Heart right ventricle (tissue), 16 donors: ENCODE measurements at regions of chr7 and their contacts with region 1.

Region 1: DNA sequence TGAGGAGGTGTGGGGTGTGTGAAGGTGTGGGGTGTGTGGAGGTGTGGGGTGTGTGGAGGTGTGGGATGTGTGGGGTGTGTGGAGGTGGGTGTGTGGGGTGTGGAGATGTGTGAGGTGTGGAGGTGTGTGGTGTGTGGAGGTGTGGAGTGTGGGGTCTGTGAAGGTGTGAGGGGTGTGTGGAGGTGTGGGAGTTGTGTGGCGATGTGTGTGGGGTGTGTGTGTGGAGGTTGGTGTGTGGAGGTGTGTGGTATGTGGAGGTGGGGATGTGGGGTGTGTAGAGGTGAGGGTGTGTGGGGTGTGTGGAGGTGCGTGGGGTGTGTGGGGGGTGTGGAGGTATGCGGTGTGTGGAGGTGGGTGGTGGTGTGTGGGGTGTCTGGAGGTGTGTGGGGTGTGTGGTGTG is 34.8 kb downstream of the SPDYE17 start:
- DNase-seq: no peak
- ATAC-seq: peak in 5 of 8 donors; percentile 14 to 53 (median 27)
- H3K4me3 ChIP-seq: no peak overlapping the region
- H3K27ac ChIP-seq: no peak overlapping the region
- H3K4me1 ChIP-seq: no peaks in the 10 kb centered on the region
- H3K27me3 ChIP-seq: no peaks in the 10 kb centered on the region
- CTCF ChIP-seq: no peak

Region 2: DNA sequence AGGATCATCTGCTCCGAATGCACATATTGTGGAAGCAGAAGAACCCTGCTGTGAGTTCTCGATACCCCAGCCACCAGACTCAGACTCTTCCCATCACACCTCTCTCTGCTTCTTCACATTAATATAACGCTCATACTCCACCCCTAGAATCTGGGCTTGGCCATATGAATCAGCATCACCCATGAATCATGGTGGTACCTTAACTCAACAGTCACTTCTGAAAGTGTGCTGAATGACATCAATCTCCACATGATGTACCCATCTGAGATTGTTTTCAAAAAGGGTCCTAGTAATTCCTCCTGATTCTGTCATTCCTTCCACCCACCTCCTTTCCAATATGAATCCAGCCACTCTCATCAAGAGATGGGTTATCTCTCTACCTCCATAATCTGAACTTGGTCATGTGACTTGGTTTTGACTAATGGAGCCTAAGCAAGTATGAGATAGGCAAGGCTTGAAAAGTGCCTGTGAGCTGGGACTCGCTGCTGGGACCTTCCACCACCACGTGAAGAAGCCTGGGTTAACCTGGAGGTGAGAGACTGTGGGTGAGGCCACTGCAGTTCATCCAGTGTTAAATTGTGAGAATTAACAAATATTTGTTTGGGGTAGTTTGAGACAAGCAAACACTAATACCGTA is 654.0 kb before region 1 on chr7:
- intact Hi-C with region 1: no loop called
- DNase-seq: no peak
- ATAC-seq: no peak
- H3K4me3 ChIP-seq: no peak overlapping the region
- H3K27ac ChIP-seq: no peak overlapping the region
- H3K4me1 ChIP-seq: peaks cover 7 to 97% (median 80%) of the 10 kb centered on the region in 9 donors
- H3K27me3 ChIP-seq: no peaks in the 10 kb centered on the region
- CTCF ChIP-seq: no peak

Region 3: GRCh38 chr7:76509931-76510877 is 487.2 kb before region 1 on chr7 and contains the start of gene UPK3B:
- intact Hi-C with region 1: loop called in 1 of 10 experiments (anchors 10 kb)
- DNase-seq: no peak
- ATAC-seq: no peak
- H3K4me3 ChIP-seq: no peak within 1 kb of the TSS
- H3K27ac ChIP-seq: no peak within 1 kb of the TSS
- H3K4me1 ChIP-seq: peaks cover 0 to 16% (median 5%) of the 10 kb centered on the region in 9 donors
- H3K27me3 ChIP-seq: no peaks in the 10 kb centered on the region
- CTCF ChIP-seq: no peak
- total RNA-seq, gene UPK3B: 0.24 to 2.7 (median 0.65) TPM in 8 of 10 donors, not detected in the others